Calu3 (cell line): ENCODE measurements at regions of chr13 and their contacts with region 1.

Region 1: DNA sequence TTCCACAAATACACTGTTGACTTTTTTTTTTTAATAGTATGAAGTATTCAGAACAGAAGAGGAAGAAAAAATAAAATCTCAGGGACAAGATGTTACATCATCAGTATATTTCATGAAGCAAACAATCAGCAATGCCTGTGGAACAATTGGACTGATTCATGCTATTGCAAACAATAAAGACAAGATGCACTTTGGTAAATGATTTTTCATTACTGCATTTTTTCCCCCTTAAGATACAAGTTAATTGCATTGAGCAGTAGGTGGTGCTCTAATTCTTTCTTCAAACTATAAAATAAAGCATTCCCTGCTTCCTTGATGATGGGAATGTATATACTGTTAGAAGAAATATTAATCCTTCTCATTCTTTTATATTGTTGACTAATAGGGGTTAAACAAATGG is 17.1 kb downstream of the UCHL3 start:
- DNase-seq: no peak
- H3K4me3 Mint-ChIP-seq: no peak overlapping the region
- H3K27ac Mint-ChIP-seq: no peak overlapping the region
- H3K4me1 Mint-ChIP-seq: no peaks in the 10 kb centered on the region
- H3K27me3 Mint-ChIP-seq: no peaks in the 10 kb centered on the region
- CTCF ChIP-seq: no peak

Region 2: GRCh38 chr13:75341028-75341427 is 225.6 kb before region 1 on chr13:
- CTCF ChIA-PET with region 1: no interaction called
- intact Hi-C with region 1: no loop called
- DNase-seq: no peak
- H3K4me3 Mint-ChIP-seq: no peak overlapping the region
- H3K27ac Mint-ChIP-seq: no peak overlapping the region
- H3K4me1 Mint-ChIP-seq: peaks cover 29% of the 10 kb centered on the region
- H3K27me3 Mint-ChIP-seq: no peaks in the 10 kb centered on the region
- CTCF ChIP-seq: no peak

Region 3: DNA sequence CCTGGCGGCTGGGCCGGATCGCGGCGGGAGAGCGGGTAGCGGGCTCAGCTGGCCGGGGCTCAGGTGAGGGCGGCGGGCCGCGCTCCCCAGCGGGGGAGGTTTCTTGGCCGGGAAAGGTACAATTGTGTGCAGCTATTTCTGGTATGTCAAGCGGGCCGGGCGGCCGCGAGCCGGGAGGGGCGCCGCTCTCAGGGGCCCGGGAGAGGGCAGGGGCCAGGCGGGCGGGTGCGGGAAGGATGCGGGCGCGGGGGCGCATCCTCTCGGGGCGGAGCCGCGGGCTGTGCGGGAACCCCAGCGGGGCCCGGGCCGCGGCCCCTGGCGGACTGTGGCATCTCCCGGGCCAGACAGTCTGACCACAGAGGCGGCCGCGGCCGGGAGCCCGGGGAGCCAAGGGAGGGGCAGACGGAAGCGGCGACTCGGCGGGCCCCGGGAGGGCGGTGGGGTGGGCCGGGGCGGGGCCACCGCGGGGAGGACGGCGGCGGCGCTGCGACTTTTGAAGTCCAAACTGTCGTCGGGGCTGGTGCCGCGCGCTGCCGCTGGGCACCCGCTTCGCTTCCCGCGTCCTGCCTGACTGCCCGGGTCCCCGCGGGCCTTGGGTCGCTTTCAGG is 69.3 kb after region 1 on chr13 and contains the start of gene LMO7:
- CTCF ChIA-PET with region 1: no interaction called
- intact Hi-C with region 1: no loop called
- DNase-seq: peak; percentile 38
- H3K4me3 Mint-ChIP-seq: peak within 1 kb of the TSS; percentile 57
- H3K27ac Mint-ChIP-seq: no peak within 1 kb of the TSS
- H3K4me1 Mint-ChIP-seq: no peaks in the 10 kb centered on the region
- H3K27me3 Mint-ChIP-seq: no peaks in the 10 kb centered on the region
- CTCF ChIP-seq: no peak
- total RNA-seq, gene LMO7: 105 and 117 TPM in 2 replicates

Region 4: GRCh38 chr13:75666646-75667351 is 100.1 kb after region 1 on chr13:
- CTCF ChIA-PET with region 1: no interaction called
- intact Hi-C with region 1: loop called (anchors 10 kb)
- DNase-seq: no peak
- H3K4me3 Mint-ChIP-seq: no peak overlapping the region
- H3K27ac Mint-ChIP-seq: no peak overlapping the region
- H3K4me1 Mint-ChIP-seq: no peaks in the 10 kb centered on the region
- H3K27me3 Mint-ChIP-seq: no peaks in the 10 kb centered on the region
- CTCF ChIP-seq: no peak